Breast epithelium (tissue), 4 donors: ENCODE measurements at regions of chr7 and their contacts with region 1.

Region 1: GRCh38 chr7:26101361-26102151 is 50.4 kb upstream of the NFE2L3 start:
- DNase-seq: no peak
- H3K4me3 ChIP-seq: peak overlapping the region; percentile 16 to 29 (median 24)
- H3K27ac ChIP-seq: no peak overlapping the region
- H3K4me1 ChIP-seq: no peaks in the 10 kb centered on the region
- H3K27me3 ChIP-seq: no peaks in the 10 kb centered on the region
- CTCF ChIP-seq: no peak
- POLR2A ChIP-seq: no peak

Region 2: GRCh38 chr7:26525398-26526264 is 424.1 kb after region 1 on chr7:
- intact Hi-C with region 1: no loop called
- DNase-seq: no peak
- H3K4me3 ChIP-seq: no peak overlapping the region
- H3K27ac ChIP-seq: no peak overlapping the region
- H3K4me1 ChIP-seq: no peaks in the 10 kb centered on the region
- H3K27me3 ChIP-seq: peaks cover 0 to 17% of the 10 kb centered on the region in 2 donors
- CTCF ChIP-seq: no peak
- POLR2A ChIP-seq: no peak

Region 3: GRCh38 chr7:27130540-27131389 is 1029.2 kb after region 1 on chr7 and contains the start of gene HOXA4:
- intact Hi-C with region 1: loop called (anchors 5 kb)
- DNase-seq: peak; percentile 89 to 94
- H3K4me3 ChIP-seq: peak within 1 kb of the TSS; percentile 69 to 98 (median 90)
- H3K27ac ChIP-seq: peak within 1 kb of the TSS; percentile 94 to 98
- H3K4me1 ChIP-seq: peaks cover 5 to 8% of the 10 kb centered on the region in 2 donors
- H3K27me3 ChIP-seq: no peaks in the 10 kb centered on the region
- CTCF ChIP-seq: no peak
- POLR2A ChIP-seq: peak; percentile 89
- total RNA-seq, gene HOXA4: 0.80 to 2.8 (median 2.0) TPM